ENCODE measurements at regions of chr12 and their contacts with region 1.

Region 1: DNA sequence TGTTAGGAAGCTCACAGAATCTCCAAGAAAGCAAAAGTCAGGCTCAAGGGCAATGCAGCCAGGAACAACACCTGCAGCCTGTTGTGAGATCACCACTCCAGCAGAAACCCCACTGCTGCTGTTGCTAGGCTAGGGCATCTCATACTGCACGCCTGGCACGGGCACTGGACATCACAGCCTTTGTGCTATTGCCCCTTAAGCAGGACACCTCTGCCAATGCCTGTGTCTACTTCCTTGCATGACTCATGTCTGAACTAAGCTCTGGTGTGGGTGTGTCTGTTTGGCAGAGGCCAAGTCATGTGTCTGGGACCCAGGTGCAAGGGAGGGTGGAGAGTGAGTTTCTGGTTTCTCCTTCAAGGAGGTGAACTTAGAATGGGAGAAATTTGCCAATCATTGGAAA is 10.0 kb upstream of the DDX47 start:
- DNase-seq: peak; percentile 93
- H3K4me3 Mint-ChIP-seq: peak overlapping the region; percentile 8
- H3K27ac Mint-ChIP-seq: peak overlapping the region; percentile 97
- H3K4me1 Mint-ChIP-seq: peaks cover 69% of the 10 kb centered on the region
- H3K27me3 Mint-ChIP-seq: no peaks in the 10 kb centered on the region
- CTCF ChIP-seq: no peak

Region 2: GRCh38 chr12:12266873-12267741 is 536.1 kb before region 1 on chr12 and contains the start of gene LRP6:
- CTCF ChIA-PET with region 1: no interaction called
- intact Hi-C with region 1: no loop called
- DNase-seq: peak; percentile 92
- H3K4me3 Mint-ChIP-seq: peak within 1 kb of the TSS; percentile 92
- H3K27ac Mint-ChIP-seq: peak within 1 kb of the TSS; percentile 97
- H3K4me1 Mint-ChIP-seq: peaks cover 22% of the 10 kb centered on the region
- H3K27me3 Mint-ChIP-seq: no peaks in the 10 kb centered on the region
- CTCF ChIP-seq: peak; percentile 21
- total RNA-seq, gene LRP6: 64.7 and 74.8 TPM in 2 replicates

Region 3: DNA sequence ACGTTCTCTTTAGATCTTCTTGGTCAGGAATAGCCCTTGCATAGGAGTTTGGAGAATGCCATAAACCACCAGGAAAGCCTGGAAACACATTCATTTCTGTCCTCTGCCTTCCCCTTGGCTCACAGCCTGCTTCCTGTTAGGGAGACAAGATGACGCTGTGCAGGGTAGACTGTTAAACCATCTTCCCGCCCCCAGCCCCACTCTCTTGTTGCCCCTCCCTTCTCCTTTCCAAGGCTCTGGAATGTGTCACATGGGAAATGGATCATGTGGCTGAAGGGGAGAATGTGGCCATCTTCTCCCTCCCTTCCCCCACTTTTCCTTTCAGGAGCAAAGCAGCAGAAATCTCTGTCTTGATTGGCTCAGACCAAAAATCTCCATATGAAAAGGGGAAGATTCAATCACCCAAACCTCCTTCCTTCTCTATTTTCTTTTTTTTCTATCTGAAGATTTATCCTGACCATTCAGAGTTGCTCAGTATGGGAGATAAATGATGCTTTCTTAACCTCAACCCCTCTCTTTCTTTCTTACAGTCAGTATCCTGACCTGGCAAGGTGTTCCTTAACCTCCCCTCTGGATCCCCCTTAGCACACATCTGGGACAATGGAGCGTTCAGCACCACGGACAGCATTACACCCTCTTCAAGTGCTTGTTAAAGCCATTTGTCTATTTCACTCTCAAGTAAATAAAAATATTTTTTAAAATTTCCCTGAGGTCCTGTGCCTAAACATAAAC is 118.6 kb before region 1 on chr12:
- CTCF ChIA-PET with region 1: no interaction called
- intact Hi-C with region 1: no loop called
- DNase-seq: peak; percentile 39
- H3K4me3 Mint-ChIP-seq: no peak overlapping the region
- H3K27ac Mint-ChIP-seq: no peak overlapping the region
- H3K4me1 Mint-ChIP-seq: peaks cover 27% of the 10 kb centered on the region
- H3K27me3 Mint-ChIP-seq: no peaks in the 10 kb centered on the region
- CTCF ChIP-seq: no peak

Region 4: GRCh38 chr12:12724661-12725545 is 78.3 kb before region 1 on chr12:
- CTCF ChIA-PET with region 1: no interaction called
- intact Hi-C with region 1: loop called (anchors 5 kb)
- DNase-seq: no peak
- H3K4me3 Mint-ChIP-seq: peak overlapping the region; percentile 99
- H3K27ac Mint-ChIP-seq: peak overlapping the region; percentile 98
- H3K4me1 Mint-ChIP-seq: peaks cover 26% of the 10 kb centered on the region
- H3K27me3 Mint-ChIP-seq: no peaks in the 10 kb centered on the region
- CTCF ChIP-seq: no peak

Region 5: GRCh38 chr12:12786716-12787601 is 16.2 kb before region 1 on chr12:
- CTCF ChIA-PET with region 1: interaction called, 9 read pairs
- intact Hi-C with region 1: loop called (anchors 1 kb)
- DNase-seq: peak; percentile 81
- H3K4me3 Mint-ChIP-seq: peak overlapping the region; percentile 66
- H3K27ac Mint-ChIP-seq: peak overlapping the region; percentile 78
- H3K4me1 Mint-ChIP-seq: peaks cover 44% of the 10 kb centered on the region
- H3K27me3 Mint-ChIP-seq: no peaks in the 10 kb centered on the region
- CTCF ChIP-seq: no peak

Region 6: DNA sequence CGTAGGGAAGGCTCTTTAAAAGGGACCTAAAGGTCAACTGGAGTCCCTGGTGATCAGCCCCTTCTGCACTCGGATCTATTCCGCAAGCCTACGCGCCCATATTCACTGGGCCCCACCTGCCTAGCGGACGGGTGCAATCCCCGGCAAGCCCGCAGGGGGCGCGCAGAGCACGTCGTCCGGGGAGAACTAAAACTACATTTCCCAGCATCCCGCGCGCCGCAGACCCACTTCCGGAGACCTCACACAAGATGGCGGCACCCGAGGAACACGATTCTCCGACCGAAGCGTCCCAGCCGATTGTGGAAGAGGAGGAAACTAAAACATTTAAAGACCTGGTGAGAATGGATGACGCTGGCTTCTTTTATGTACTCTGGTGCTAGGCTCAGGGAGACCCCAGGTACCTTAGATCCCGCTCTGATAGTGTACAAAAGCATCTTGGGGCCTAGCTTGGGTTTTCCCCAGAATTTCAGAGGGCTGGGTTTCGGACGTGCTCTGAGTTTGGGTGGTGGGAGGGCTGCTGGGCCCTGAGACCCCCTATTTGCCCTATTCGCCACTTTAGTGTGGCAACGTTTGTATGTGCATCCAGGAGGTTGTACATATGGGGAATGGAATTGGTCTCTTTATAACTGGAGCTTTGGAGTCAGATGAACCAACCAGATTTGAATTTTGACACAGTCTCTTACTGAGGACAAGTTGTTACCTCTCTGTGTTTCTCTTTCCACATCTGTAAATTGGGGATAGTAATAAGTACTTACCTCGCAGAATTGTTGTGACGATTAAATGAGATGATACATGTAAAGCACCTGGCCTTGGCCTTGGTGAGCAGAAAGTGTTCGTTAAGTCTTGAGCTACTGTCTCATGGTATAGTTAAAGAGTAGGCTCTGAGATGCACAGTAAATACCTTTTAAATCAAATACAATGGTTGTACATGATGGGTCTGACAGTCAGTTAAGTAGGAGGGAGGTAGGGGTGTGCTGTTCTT is 10.2 kb after region 1 on chr12 and contains the start of gene DDX47:
- CTCF ChIA-PET with region 1: interaction called, 17 read pairs
- intact Hi-C with region 1: no loop called
- DNase-seq: peak; percentile 98
- H3K4me3 Mint-ChIP-seq: peak within 1 kb of the TSS; percentile 88
- H3K27ac Mint-ChIP-seq: peak within 1 kb of the TSS; percentile 95
- H3K4me1 Mint-ChIP-seq: peaks cover 56% of the 10 kb centered on the region
- H3K27me3 Mint-ChIP-seq: no peaks in the 10 kb centered on the region
- CTCF ChIP-seq: peak; percentile 92
- total RNA-seq, gene DDX47: 60.2 and 60.5 TPM in 2 replicates

Region 7: GRCh38 chr12:12837025-12837872 is 34.1 kb after region 1 on chr12:
- CTCF ChIA-PET with region 1: interaction called, 10 read pairs
- intact Hi-C with region 1: loop called (anchors 5 kb)
- DNase-seq: peak; percentile 64
- H3K4me3 Mint-ChIP-seq: peak overlapping the region; percentile 25
- H3K27ac Mint-ChIP-seq: peak overlapping the region; percentile 82
- H3K4me1 Mint-ChIP-seq: peaks cover 70% of the 10 kb centered on the region
- H3K27me3 Mint-ChIP-seq: no peaks in the 10 kb centered on the region
- CTCF ChIP-seq: no peak

Region 8: GRCh38 chr12:12872139-12872881 is 69.1 kb after region 1 on chr12:
- CTCF ChIA-PET with region 1: interaction called, 5 read pairs
- intact Hi-C with region 1: loop called (anchors 5 kb)
- DNase-seq: peak; percentile 91
- H3K4me3 Mint-ChIP-seq: peak overlapping the region; percentile 43
- H3K27ac Mint-ChIP-seq: peak overlapping the region; percentile 99
- H3K4me1 Mint-ChIP-seq: peaks cover 83% of the 10 kb centered on the region
- H3K27me3 Mint-ChIP-seq: no peaks in the 10 kb centered on the region
- CTCF ChIP-seq: no peak

Region 9: DNA sequence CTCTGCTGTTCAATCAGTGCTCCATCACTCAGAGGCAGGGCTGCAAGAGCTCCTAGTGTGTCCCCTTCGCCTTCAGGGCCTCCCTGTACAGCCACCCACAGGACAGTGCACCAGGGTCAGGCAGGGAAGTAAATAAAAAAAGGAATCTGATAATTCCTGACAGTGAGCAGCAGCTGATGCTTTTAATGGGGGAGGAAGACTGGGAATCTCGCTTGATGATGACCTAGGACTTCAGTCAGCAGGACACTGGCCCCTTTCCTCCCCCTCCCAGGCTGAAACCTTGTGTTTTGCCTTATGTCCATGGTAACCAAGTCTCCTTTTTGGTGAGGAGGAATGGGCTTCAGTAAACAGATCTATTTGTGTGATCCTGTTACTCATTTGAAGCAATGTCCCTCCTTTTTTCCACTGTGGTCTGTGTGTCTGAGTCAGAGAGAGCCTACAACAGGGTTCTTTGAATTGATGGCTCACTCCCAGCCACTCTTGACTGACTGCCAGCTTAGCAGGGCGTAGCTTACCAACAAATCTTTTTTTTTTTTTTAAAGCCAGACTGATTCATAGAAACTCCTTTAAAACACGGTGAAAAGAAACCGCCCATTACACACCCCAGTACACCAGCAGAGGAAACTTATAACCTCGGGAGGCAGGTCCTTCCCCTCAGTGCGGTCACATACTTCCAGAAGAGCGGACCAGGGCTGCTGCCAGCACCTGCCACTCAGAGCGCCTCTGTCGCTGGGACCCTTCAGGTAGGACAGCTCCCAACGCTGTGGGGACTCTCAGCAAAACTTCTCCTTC is 393.1 kb after region 1 on chr12 and contains the start of gene EMP1:
- CTCF ChIA-PET with region 1: interaction called, 3 read pairs
- intact Hi-C with region 1: loop called (anchors 10 kb)
- DNase-seq: peak; percentile 88
- H3K4me3 Mint-ChIP-seq: peak within 1 kb of the TSS; percentile 76
- H3K27ac Mint-ChIP-seq: peak within 1 kb of the TSS; percentile 68
- H3K4me1 Mint-ChIP-seq: peaks cover 55% of the 10 kb centered on the region
- H3K27me3 Mint-ChIP-seq: no peaks in the 10 kb centered on the region
- CTCF ChIP-seq: no peak
- total RNA-seq, gene EMP1: 128 and 146 TPM in 2 replicates

Region 10: DNA sequence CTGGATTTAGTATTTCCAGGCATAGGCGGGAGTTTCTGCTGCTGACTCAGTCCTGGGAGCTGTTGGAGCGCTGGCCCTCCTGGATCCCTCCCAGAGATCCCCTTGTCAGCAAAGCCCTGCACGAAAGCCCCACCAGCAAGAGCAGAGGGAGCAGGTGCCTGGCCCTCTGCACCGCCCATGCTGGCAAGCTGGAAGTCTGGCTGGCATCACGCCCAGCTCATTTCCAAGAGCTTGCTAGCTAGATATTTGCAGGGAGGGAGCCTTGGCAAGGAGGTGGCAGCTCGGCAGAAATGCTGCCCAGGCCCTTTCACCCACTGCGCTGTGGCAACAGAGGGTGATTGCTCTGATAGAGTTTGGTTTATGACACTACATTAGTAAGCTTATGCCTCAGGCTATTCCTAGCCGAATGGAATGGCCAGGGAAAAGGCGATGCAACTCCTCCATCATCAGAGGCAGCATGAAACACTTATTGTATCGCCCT is 587.2 kb after region 1 on chr12:
- CTCF ChIA-PET with region 1: no interaction called
- intact Hi-C with region 1: no loop called
- DNase-seq: peak; percentile 89
- H3K4me3 Mint-ChIP-seq: peak overlapping the region; percentile 24
- H3K27ac Mint-ChIP-seq: peak overlapping the region; percentile 95
- H3K4me1 Mint-ChIP-seq: peaks cover 52% of the 10 kb centered on the region
- H3K27me3 Mint-ChIP-seq: no peaks in the 10 kb centered on the region
- CTCF ChIP-seq: no peak

Measured in Calu3 (cell line).